ENCODE measurements at regions of chr16 and their contacts with region 1.

Region 1: GRCh38 chr16:50806099-50807062 is 64.5 kb downstream of the CYLD start:
- DNase-seq: peak; percentile 95
- H3K4me3 Mint-ChIP-seq: peak overlapping the region; percentile 75
- H3K27ac Mint-ChIP-seq: peak overlapping the region; percentile 69
- H3K4me1 Mint-ChIP-seq: peaks cover 17% of the 10 kb centered on the region
- H3K27me3 Mint-ChIP-seq: peaks cover 5% of the 10 kb centered on the region

Region 2: GRCh38 chr16:50024684-50025536 is 781.5 kb before region 1 on chr16 and contains the start of gene CNEP1R1:
- intact Hi-C with region 1: loop called (anchors 1 kb)
- DNase-seq: peak; percentile 98
- H3K4me3 Mint-ChIP-seq: peak within 1 kb of the TSS; percentile 97
- H3K27ac Mint-ChIP-seq: peak within 1 kb of the TSS; percentile 88
- H3K4me1 Mint-ChIP-seq: peaks cover 17% of the 10 kb centered on the region
- H3K27me3 Mint-ChIP-seq: peaks cover 11% of the 10 kb centered on the region
- total RNA-seq, gene CNEP1R1: 22.3 and 23.0 TPM in 2 replicates

Region 3: GRCh38 chr16:50266337-50267091 is 539.9 kb before region 1 on chr16 and contains the start of gene ADCY7:
- intact Hi-C with region 1: loop called (anchors 1 kb)
- DNase-seq: peak; percentile 95
- H3K4me3 Mint-ChIP-seq: peak within 1 kb of the TSS; percentile 96
- H3K27ac Mint-ChIP-seq: peak within 1 kb of the TSS; percentile 96
- H3K4me1 Mint-ChIP-seq: peaks cover 60% of the 10 kb centered on the region
- H3K27me3 Mint-ChIP-seq: no peaks in the 10 kb centered on the region
- total RNA-seq, gene ADCY7: 85.6 and 86.2 TPM in 2 replicates

Region 4: GRCh38 chr16:50368410-50369132 is 437.8 kb before region 1 on chr16 and contains the start of gene BRD7:
- intact Hi-C with region 1: loop called (anchors 2 kb)
- DNase-seq: peak; percentile 89
- H3K4me3 Mint-ChIP-seq: peak within 1 kb of the TSS; percentile 92
- H3K27ac Mint-ChIP-seq: peak within 1 kb of the TSS; percentile 91
- H3K4me1 Mint-ChIP-seq: peaks cover 41% of the 10 kb centered on the region
- H3K27me3 Mint-ChIP-seq: peaks cover 3% of the 10 kb centered on the region
- total RNA-seq, gene BRD7: 92.7 and 98.8 TPM in 2 replicates

Region 5: GRCh38 chr16:50467943-50468760 is 338.2 kb before region 1 on chr16:
- intact Hi-C with region 1: no loop called
- DNase-seq: no peak
- H3K4me3 Mint-ChIP-seq: peak overlapping the region; percentile 53
- H3K27ac Mint-ChIP-seq: no peak overlapping the region
- H3K4me1 Mint-ChIP-seq: no peaks in the 10 kb centered on the region
- H3K27me3 Mint-ChIP-seq: peaks cover 45% of the 10 kb centered on the region

Region 6: DNA sequence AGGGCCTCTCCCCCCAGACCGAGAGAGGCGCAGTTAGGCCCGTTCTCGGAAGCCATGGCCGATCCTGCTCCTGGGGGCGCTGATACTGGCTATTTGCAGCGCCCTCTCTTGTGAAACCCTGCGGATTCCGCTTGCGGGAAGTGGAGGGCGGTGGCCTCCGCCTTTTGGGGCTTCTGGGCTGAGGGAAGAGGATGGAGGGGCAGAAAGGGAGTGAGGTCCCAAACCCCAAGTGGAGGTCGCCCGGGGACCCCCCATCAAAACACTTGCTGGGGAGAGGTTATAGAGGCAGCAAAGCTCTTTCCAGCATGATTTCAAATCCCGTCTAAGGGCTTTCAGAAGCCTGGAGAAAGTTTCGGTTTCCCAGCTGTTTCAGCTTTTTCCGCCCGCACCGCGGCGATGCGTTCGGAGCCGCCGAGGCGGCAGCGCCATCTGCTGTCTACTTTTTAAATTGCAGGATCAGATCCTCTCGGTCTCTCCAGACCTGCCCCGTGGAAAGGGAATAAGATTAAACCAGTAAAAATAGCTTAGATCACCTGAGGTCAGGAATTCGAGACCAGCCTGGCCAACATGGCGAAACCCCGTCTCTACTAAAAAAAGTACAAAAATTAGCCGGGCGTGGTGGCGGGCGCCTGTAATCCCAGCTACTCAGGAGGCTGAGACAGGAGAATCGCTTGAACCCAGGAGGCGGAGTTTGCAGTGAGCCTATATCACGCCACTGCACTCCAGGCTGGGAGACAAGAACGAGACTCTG is 141.1 kb before region 1 on chr16:
- intact Hi-C with region 1: loop called (anchors 1 kb)
- DNase-seq: peak; percentile 97
- H3K4me3 Mint-ChIP-seq: peak overlapping the region; percentile 71
- H3K27ac Mint-ChIP-seq: peak overlapping the region; percentile 53
- H3K4me1 Mint-ChIP-seq: peaks cover 42% of the 10 kb centered on the region
- H3K27me3 Mint-ChIP-seq: no peaks in the 10 kb centered on the region

Region 7: DNA sequence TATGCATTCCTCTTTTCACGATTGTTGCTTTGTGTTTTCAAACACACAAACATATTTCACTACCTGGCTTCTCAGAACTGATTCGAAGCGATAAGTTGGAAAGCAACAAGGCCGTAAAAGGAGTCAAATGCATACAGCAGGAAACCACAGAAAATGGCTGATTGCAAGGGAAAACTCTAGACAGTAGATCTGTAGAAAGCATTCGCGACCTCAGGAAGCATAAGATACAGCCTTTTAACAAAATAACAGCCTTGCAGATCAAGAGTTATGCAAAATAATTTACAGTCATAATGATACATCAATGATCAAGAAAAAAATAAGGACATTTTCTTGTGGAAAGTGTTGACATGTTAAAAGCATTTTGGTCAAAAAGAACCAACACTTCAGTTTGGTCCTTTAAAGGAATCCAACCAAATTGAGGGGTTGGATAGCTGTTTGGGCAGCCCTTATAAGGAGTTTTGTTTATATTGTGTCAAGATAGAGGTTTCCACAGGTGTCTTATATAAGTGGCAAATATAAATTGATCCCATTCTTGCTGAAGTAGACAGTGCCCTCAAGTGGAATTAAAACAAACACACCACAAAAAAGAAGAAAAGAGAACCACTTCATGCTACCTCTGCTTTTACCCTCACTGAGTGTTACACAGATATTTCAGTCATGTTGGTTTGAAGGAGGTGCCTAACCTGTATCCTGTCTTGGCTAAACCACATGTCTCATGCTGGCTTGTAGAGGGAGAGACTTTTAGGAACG is 59.0 kb before region 1 on chr16:
- intact Hi-C with region 1: loop called (anchors 1 kb)
- DNase-seq: peak; percentile 86
- H3K4me3 Mint-ChIP-seq: peak overlapping the region; percentile 80
- H3K27ac Mint-ChIP-seq: peak overlapping the region; percentile 90
- H3K4me1 Mint-ChIP-seq: peaks cover 50% of the 10 kb centered on the region
- H3K27me3 Mint-ChIP-seq: no peaks in the 10 kb centered on the region

Region 8: GRCh38 chr16:50942143-50942542 is 135.8 kb after region 1 on chr16:
- intact Hi-C with region 1: no loop called
- DNase-seq: no peak
- H3K4me3 Mint-ChIP-seq: no peak overlapping the region
- H3K27ac Mint-ChIP-seq: no peak overlapping the region
- H3K4me1 Mint-ChIP-seq: no peaks in the 10 kb centered on the region
- H3K27me3 Mint-ChIP-seq: no peaks in the 10 kb centered on the region